ENCODE measurements at regions of chr2 and their contacts with region 1.

Region 1: DNA sequence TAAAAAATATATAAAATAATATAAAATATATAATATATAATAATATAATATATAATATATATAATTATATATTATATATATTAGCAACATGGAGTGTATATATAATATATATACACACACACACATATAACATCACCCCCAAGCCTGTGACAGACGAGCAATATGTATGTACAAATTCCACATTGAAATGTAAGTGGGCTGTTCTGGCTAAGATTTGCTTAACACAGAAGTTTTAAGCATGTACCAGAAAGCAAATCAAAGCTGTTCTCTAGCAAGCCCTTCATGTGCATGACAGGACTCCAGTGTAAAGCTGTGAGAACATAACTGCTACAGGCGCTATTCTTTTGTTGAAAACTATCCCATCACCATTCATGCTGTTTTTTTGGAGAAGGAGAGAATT is 261.7 kb upstream of the TNP1 start:
- DNase-seq: no peak
- H3K4me3 ChIP-seq: no peak overlapping the region
- CTCF ChIP-seq: no peak
- POLR2A ChIP-seq: no peak

Region 2: GRCh38 chr2:216119986-216120385 is 1001.6 kb before region 1 on chr2:
- intact Hi-C with region 1: loop called (anchors 5 kb)
- DNase-seq: no peak
- H3K4me3 ChIP-seq: no peak overlapping the region
- CTCF ChIP-seq: no peak
- POLR2A ChIP-seq: no peak